WTC11 (cell line): ENCODE measurements at regions of chr3 and their contacts with region 1.

Region 1: GRCh38 chr3:13466781-13467180 is 13.3 kb upstream of the HDAC11 start:
- DNase-seq: no peak
- ATAC-seq: no peak
- H3K4me3 Mint-ChIP-seq: no peak overlapping the region
- H3K27ac Mint-ChIP-seq: no peak overlapping the region
- H3K4me1 Mint-ChIP-seq: peaks cover 14% of the 10 kb centered on the region
- H3K27me3 Mint-ChIP-seq: peaks cover 30% of the 10 kb centered on the region
- CTCF ChIP-seq: no peak

Region 2: DNA sequence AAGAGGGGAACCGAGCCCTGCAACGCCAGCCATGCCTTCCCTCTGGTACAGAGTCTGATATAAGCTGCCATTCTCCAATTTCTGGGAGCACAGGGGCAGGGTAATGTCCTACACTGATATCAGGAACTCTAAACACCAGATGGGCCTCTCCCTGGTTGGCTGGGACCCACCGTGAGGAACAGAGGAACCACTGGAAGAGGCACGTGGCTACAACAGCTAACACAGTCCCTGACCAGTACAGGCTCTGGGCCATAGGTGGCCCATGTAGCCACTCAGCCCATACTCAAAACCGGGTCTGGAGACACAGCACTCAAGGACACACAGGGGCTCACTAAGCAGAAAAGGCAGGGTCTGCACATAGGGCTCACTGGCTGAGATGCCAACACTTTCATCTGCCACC is 60.6 kb before region 1 on chr3:
- CTCF ChIA-PET with region 1: no interaction called
- POLR2A ChIA-PET with region 1: no interaction called
- DNase-seq: no peak
- ATAC-seq: no peak
- H3K4me3 Mint-ChIP-seq: no peak overlapping the region
- H3K27ac Mint-ChIP-seq: no peak overlapping the region
- H3K4me1 Mint-ChIP-seq: peaks cover 9% of the 10 kb centered on the region
- H3K27me3 Mint-ChIP-seq: no peaks in the 10 kb centered on the region
- CTCF ChIP-seq: no peak

Region 3: GRCh38 chr3:13427662-13428603 is 38.8 kb before region 1 on chr3:
- CTCF ChIA-PET with region 1: no interaction called
- POLR2A ChIA-PET with region 1: no interaction called
- DNase-seq: no peak
- ATAC-seq: no peak
- H3K4me3 Mint-ChIP-seq: no peak overlapping the region
- H3K27ac Mint-ChIP-seq: no peak overlapping the region
- H3K4me1 Mint-ChIP-seq: peaks cover 7% of the 10 kb centered on the region
- H3K27me3 Mint-ChIP-seq: no peaks in the 10 kb centered on the region
- CTCF ChIP-seq: no peak

Region 4: DNA sequence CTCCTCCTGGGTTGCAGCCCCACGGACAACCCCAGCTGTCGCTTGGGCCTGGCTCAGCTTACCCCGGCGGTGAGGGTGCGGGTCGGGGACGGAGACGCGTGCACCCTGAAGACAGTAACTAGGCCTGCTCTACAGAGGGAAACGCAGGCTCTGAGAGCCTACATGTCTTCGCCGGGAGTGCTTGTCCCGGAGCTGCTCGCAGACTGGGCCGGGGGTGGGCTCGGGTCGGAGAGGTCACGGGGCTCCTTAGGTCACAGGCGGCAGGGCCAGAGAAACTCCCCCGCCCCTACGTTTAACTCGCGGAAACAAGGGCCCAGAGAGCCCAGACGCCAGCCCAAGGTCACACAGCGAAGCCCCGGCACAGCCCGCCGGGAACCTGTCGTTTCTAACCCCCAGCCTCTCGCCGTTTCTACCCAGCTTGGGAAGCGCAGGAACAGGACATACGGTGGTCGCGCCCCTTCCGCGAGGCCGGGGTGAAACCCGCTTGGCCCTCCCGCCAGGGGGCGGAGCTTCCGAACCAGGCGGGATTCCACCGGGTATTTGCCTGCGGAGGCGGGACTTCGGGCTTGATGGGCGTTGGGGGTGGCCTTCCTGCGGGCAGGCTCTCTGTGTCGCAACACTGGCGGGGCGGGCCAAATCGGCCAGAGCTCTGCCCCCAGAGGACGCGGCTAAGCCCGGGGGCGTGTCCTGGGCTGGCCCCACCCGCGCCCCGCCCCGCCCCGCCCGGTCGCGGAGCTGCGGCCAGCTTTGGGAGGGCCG is 13.0 kb after region 1 on chr3 and contains the start of gene HDAC11:
- CTCF ChIA-PET with region 1: interaction called, 16 read pairs
- POLR2A ChIA-PET with region 1: interaction called, 5 read pairs
- DNase-seq: peak; percentile 99
- ATAC-seq: peak; percentile 93
- H3K4me3 Mint-ChIP-seq: peak within 1 kb of the TSS; percentile 85
- H3K27ac Mint-ChIP-seq: peak within 1 kb of the TSS; percentile 91
- H3K4me1 Mint-ChIP-seq: peaks cover 33% of the 10 kb centered on the region
- H3K27me3 Mint-ChIP-seq: peaks cover 28% of the 10 kb centered on the region
- CTCF ChIP-seq: no peak
- total RNA-seq, gene HDAC11: 11.5 to 12.5 TPM (median 12.0 TPM) in 3 replicates

Region 5: DNA sequence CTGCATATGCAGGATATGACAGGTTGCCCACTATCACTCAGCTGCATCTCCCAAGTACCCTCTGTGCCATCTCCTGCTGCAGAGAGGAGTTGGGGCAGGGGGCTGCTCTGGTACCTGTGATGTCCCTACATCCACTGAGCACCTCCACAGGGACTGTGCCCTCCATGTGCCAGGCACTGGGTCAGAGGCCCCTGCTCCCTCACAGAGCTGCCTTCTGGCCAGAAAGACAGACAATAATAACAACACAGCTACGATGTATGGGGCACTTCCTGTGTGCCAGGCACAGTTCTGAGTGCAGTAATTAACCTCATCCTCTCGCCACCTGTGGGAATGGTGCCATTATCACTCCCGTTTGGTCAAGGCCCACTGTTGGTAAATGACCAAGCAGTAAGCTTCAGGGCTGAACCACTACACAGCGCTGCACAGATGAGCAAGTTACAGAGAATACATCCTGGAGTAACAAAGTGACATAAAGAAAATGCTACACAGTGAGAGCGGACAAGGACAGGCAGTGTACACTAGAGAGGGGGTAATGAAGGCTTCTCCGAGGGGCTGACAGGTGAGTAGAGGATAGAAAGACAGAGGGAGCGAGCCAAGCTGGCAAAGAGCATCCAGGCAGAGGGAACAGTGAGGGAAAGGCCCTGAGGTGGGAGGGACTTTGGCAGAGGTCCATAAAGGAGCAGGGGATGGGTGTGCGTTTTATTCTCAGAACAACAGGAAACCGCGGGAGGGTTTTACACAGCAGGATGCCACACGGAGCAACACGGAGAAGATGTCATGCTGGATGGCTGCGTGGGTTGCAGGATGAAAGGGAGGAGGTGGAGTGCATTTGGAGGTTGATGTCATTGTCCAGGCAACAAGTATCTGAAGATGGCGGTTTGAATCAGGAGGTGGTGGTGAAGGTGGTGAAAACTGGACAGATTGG is 399.5 kb after region 1 on chr3:
- CTCF ChIA-PET with region 1: no interaction called
- POLR2A ChIA-PET with region 1: no interaction called
- DNase-seq: no peak
- ATAC-seq: no peak
- H3K4me3 Mint-ChIP-seq: no peak overlapping the region
- H3K27ac Mint-ChIP-seq: no peak overlapping the region
- H3K4me1 Mint-ChIP-seq: peaks cover 12% of the 10 kb centered on the region; the same call in 1 of the 2 replicates
- H3K27me3 Mint-ChIP-seq: peaks cover 31% of the 10 kb centered on the region
- CTCF ChIP-seq: no peak